Heart right ventricle (tissue), 16 donors: ENCODE measurements at regions of chr6 and their contacts with region 1.

Region 1: GRCh38 chr6:72622094-72622940 is 453 bp downstream of the KCNQ5 start:
- DNase-seq: peak in 1 of 2 donors; percentile 17
- ATAC-seq: peak in 2 of 8 donors; percentile 27 to 43
- H3K4me3 ChIP-seq: peak overlapping the region in 9 of 10 donors; percentile 34 to 60 (median 48)
- H3K27ac ChIP-seq: peak overlapping the region in 1 of 10 donors; percentile 23
- H3K4me1 ChIP-seq: peaks cover 0 to 40% (median 34%) of the 10 kb centered on the region in 9 donors
- H3K27me3 ChIP-seq: peaks cover 4 to 72% (median 60%) of the 10 kb centered on the region in 7 donors
- CTCF ChIP-seq: peak in 1 of 9 donors; percentile 10

Region 2: DNA sequence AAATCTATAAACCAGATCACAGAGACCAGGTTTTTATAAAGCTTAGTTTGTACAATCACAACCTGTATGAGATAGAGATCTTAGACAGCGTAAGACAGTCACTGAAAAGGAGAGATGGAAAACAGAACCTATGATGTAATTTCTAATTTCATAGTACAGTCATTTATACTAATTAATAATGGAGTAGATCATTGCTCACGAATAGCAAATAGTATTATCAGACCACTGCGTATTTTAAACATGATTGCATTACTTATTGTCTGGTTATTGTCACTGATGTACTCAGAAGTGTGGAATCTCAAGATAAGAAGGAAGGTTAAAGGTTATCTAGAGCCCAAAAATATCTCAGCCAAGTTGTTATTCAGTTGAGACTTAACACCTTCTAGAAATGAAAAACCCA is 487.3 kb after region 1 on chr6:
- intact Hi-C with region 1: loop called in 1 of 10 experiments (anchors 10 kb)
- DNase-seq: no peak
- ATAC-seq: no peak
- H3K4me3 ChIP-seq: no peak overlapping the region
- H3K27ac ChIP-seq: no peak overlapping the region
- H3K4me1 ChIP-seq: no peaks in the 10 kb centered on the region
- H3K27me3 ChIP-seq: no peaks in the 10 kb centered on the region
- CTCF ChIP-seq: no peak

Region 3: DNA sequence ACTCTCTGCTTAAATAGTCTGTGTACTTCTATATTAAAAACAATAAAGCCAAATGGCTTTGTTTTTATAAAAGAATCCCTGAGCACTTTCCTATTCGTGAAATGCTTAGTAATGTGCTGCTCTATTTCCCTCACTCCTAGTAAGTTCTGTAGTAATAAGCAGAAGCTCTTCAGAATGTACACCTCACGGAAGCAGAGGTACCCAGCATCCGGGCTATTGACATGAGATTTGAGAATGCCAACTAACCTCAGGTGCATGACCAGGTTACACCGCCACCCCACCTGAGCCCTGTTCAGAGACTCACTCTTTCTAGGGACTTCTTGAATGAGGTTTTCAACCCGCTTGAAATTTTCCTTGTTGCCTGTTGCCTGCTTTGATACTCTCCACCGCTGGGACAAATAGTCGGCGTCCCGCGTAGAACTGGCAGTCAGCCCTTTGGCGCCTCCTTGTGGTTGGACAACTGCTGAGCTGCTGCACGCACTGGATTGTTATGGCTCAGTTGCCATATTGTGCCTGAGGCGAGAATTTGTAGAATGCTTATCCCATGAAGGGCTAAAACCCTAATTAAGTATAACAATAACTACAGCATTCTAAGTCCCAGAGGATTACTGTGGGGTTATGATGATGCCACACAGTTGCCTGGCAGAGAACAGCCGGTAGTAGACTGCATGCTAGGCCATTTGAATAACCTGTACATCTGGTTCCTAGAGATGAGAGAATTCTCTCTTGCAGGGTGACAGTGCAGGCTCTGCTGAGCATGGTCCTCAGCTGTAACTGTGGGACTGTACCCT is 507.5 kb after region 1 on chr6:
- intact Hi-C with region 1: loop called in 4 of 10 experiments (anchors 5 kb)
- DNase-seq: peak; percentile 59 to 67
- ATAC-seq: peak in 7 of 8 donors; percentile 39 to 79 (median 59)
- H3K4me3 ChIP-seq: no peak overlapping the region
- H3K27ac ChIP-seq: no peak overlapping the region
- H3K4me1 ChIP-seq: no peaks in the 10 kb centered on the region
- H3K27me3 ChIP-seq: peaks cover 0 to 15% (median 0%) of the 10 kb centered on the region in 7 donors
- CTCF ChIP-seq: peak; percentile 34 to 91 (median 72)

Region 4: DNA sequence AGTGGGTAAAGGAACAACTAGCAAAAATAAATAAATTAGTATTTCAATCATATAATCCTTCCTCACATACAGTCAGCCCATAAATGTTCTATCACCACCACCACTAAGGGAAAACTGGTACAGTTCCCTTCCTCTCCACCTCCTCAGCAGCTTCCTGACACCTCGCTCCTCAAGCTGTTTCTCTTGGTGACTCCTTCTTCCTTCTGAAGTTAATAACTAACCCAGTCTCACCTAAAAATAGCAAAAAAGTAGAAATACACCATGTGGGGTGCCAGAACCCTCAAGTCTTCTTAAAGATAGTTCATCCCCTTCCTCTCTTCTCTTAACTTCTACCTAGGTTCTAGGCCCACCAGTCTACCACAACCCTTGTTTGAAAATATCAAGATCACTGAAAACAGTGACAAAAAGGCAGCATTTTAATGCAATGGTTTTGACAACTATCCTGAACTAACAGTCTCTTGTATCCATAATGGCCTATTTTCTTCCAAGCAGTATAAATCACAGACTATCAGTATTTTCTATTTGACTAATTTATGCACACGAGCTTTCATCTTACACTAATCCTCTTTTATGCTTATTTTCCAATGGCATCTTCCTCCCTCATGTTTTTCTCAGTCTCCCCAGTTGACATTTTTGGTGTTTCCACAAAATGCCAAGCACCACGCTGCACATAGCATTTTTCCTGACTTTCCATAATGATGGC is 517.5 kb after region 1 on chr6:
- intact Hi-C with region 1: loop called in 1 of 10 experiments (anchors 5 kb)
- DNase-seq: no peak
- ATAC-seq: no peak
- H3K4me3 ChIP-seq: no peak overlapping the region
- H3K27ac ChIP-seq: no peak overlapping the region
- H3K4me1 ChIP-seq: no peaks in the 10 kb centered on the region
- H3K27me3 ChIP-seq: no peaks in the 10 kb centered on the region
- CTCF ChIP-seq: no peak

Region 5: GRCh38 chr6:73180763-73181619 is 558.7 kb after region 1 on chr6:
- intact Hi-C with region 1: loop called in 1 of 10 experiments (anchors 10 kb)
- DNase-seq: no peak
- ATAC-seq: peak in 6 of 8 donors; percentile 59 to 79 (median 74)
- H3K4me3 ChIP-seq: peak overlapping the region in 5 of 10 donors; percentile 15 to 37 (median 30)
- H3K27ac ChIP-seq: no peak overlapping the region
- H3K4me1 ChIP-seq: peaks cover 0 to 4% (median 0%) of the 10 kb centered on the region in 9 donors
- H3K27me3 ChIP-seq: peaks cover 0 to 16% (median 0%) of the 10 kb centered on the region in 7 donors
- CTCF ChIP-seq: peak; percentile 24 to 76 (median 70)